K562 (cell line): ENCODE measurements at regions of chr12 and their contacts with region 1.

Region 1: DNA sequence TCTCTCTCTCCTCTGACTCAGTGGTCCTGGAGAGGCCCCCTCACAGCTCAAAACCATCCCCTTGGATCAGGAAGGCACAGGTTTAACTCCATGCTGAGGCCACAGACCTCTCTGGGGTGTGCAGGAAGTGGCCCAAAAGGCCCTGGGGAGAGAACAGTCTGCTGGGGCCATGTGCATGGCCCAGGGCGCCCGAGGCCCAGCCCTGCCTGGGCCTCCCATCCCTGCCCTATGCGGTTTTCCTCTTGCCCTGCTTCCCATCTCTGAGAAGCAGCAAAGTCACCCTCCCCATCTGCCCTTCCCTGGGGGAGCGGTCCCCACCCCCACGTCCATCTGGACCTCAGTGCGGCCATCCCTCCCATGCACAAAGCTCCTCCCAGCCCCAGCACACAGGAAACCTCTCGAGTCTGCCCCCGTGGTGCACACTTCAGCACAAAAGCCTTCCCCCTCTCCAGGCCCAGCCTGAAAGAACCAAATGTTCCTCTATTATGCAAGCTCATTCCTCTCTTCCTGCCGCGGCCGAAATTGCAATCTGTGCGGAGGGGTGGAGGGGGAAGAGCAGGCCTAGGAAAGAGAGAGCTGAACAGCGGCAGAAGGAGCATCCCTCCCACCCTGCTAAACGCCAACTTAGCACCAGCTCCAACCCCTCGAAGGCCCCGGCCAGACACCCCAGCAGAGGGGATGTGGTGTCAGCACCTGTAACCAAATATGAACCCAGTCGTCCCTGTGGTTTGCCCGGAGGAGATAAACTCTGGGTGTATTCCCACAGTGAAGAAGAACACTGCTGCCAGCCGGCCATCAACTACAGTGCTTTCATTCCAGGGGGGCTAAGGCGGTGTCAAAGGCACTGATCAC is 108.5 kb downstream of the SCARB1 start:
- DNase-seq: no peak
- ATAC-seq: peak; percentile 22; the same call in 2 of the 3 replicates
- H3K4me3 ChIP-seq: no peak overlapping the region
- H3K27ac ChIP-seq: no peak overlapping the region
- H3K4me1 ChIP-seq: peaks cover 0 to 10% of the 10 kb centered on the region in 2 experiments; a peak in 1 of 5 replicates
- H3K27me3 ChIP-seq: peaks cover 61 to 91% of the 10 kb centered on the region in 2 experiments
- CTCF ChIP-seq: no peak
- EP300 ChIP-seq: no peak
- POLR2A ChIP-seq: no peak
- RAD21 ChIP-seq: no peak

Region 2: DNA sequence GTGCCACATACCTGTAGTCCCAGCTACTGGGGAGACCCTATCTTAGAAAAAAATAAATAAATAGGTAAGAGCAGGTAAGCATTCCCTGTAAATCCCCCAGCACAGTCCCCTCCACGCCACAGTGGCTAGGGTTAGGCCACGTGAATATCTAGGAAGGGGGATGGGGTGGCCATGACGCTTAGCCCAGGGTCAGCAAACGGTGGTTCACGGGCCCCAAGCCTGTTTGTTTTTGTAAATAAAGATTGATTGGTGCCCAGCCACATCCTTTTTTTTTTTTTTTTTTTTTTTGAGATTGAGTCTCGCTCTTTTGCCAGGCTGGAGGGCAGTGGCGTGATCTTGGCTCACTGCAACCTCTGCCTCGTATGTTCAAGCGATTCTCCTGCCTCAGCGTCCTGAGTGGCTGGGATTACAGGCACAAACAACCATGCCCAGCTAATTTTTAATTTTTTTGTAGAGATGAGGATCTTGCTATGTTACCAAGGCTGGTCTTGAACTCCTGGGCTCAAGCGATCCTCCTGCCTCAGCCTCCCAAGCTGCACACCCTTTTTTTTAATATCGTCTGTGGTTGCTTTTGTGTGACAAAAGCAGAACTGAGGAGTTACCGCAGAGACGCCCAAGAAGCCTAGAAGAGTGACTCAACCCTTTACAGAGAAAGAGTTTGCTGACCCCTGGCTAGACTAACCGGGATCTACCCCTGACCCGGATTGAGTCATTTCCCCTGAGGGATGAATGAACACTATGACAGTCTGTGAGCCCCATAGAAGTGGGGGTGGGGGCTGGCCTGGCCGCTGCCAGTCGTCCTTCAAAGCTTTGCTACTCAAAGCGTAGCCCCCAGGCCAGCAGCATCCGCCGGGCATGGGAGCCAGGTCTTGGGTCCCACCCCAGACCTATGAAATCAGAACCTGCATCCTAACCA is 74.1 kb before region 1 on chr12:
- CTCF ChIA-PET with region 1: no interaction called
- POLR2A ChIA-PET with region 1: no interaction called
- in situ Hi-C with region 1: no loop called
- intact Hi-C with region 1: loop called (anchors 2 kb)
- DNase-seq: peak; percentile 63 to 79 (median 70)
- ATAC-seq: peak; percentile 94
- H3K4me3 ChIP-seq: no peak overlapping the region
- H3K27ac ChIP-seq: no peak overlapping the region
- H3K4me1 ChIP-seq: peaks cover 20 to 48% of the 10 kb centered on the region in 2 experiments
- H3K27me3 ChIP-seq: peaks cover 0 to 19% of the 10 kb centered on the region in 2 experiments; a peak in 1 of 5 replicates
- CTCF ChIP-seq: peak; percentile 69 to 78 (median 71)
- EP300 ChIP-seq: 0 out of 2 replicates have a peak, but pooled peaks have one; percentile 11
- POLR2A ChIP-seq: no peak
- RAD21 ChIP-seq: peak; percentile 83 to 88